ENCODE measurements at regions of chr9 and their contacts with region 1.

Region 1: GRCh38 chr9:21334701-21335632 is at the start of gene KLHL9:
- DNase-seq: peak; percentile 64 to 94 (median 86)
- ATAC-seq: peak; percentile 84
- H3K4me3 ChIP-seq: peak within 1 kb of the TSS; percentile 67 to 88
- H3K4me3 Mint-ChIP-seq: peak within 1 kb of the TSS; percentile 92
- H3K27ac ChIP-seq: peak within 1 kb of the TSS; percentile 93 to 96
- H3K27ac Mint-ChIP-seq: peak within 1 kb of the TSS; percentile 96
- H3K4me1 ChIP-seq: peaks cover 45% of the 10 kb centered on the region
- H3K4me1 Mint-ChIP-seq: peaks cover 56% of the 10 kb centered on the region
- H3K27me3 ChIP-seq: no peaks in the 10 kb centered on the region
- H3K27me3 Mint-ChIP-seq: no peaks in the 10 kb centered on the region
- CTCF ChIP-seq: no peak
- total RNA-seq, gene KLHL9: 11.2 to 11.4 TPM

Region 2: DNA sequence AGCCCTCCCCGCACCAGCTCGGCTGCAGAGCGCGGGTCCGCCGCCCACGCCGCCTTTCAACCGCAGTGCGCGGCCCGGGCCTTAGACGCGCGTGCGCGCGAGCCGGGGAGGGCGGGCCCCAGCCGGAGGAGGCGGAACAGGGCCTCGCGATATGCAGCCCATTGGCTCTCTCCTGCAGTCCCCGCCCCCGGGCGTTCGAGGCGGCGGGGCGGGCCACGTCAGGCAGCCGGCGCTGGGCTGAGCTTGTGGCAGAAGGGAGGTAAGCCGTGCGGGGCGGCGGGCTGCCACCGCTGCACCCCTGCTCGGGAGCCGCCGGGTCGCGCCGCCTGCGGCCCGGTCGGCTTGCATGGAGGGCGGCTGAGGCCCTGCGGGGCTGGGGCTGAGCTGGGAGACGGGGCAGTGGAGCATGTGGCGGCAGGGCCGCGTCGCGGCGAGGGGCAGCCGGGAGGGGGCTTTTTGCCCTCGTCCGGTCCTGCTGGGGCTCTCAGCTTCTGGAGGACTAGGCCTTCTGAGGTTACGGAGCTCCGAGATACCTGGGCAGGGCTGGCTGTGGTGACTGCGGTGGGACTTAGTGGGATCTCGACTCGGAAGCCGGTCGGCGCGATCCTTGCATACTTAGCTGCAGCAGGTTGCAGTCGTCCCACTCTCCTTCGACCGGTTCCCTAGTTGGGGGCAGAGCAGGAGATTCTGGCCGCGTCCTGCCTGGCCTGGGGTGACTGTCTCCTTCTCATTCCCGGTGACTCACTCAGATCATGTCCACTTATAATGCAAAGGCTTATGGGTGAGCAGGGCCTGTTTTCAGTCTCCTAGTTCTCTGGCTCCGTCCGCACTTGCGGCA is 650.7 kb before region 1 on chr9 and contains the start of gene FOCAD:
- CTCF ChIA-PET with region 1: no interaction called
- POLR2A ChIA-PET with region 1: no interaction called
- intact Hi-C with region 1: loop called in 1 of 2 experiments (anchors 5 kb)
- DNase-seq: peak; percentile 88 to 97 (median 94)
- ATAC-seq: peak; percentile 98
- H3K4me3 ChIP-seq: peak within 1 kb of the TSS; percentile 63 to 74
- H3K4me3 Mint-ChIP-seq: peak within 1 kb of the TSS; percentile 87
- H3K27ac ChIP-seq: peak within 1 kb of the TSS; percentile 57 to 64
- H3K27ac Mint-ChIP-seq: peak within 1 kb of the TSS; percentile 84
- H3K4me1 ChIP-seq: peaks cover 8% of the 10 kb centered on the region
- H3K4me1 Mint-ChIP-seq: peaks cover 20% of the 10 kb centered on the region
- H3K27me3 ChIP-seq: no peaks in the 10 kb centered on the region
- H3K27me3 Mint-ChIP-seq: no peaks in the 10 kb centered on the region
- CTCF ChIP-seq: no peak
- total RNA-seq, gene FOCAD: 7.1 to 9.8 TPM

Region 3: GRCh38 chr9:21311889-21312288 is 23.1 kb before region 1 on chr9:
- CTCF ChIA-PET with region 1: no interaction called
- POLR2A ChIA-PET with region 1: no interaction called
- intact Hi-C with region 1: no loop called
- DNase-seq: no peak
- ATAC-seq: no peak
- H3K4me3 ChIP-seq: no peak overlapping the region
- H3K4me3 Mint-ChIP-seq: no peak overlapping the region
- H3K27ac ChIP-seq: no peak overlapping the region
- H3K27ac Mint-ChIP-seq: no peak overlapping the region
- H3K4me1 ChIP-seq: no peaks in the 10 kb centered on the region
- H3K4me1 Mint-ChIP-seq: no peaks in the 10 kb centered on the region
- H3K27me3 ChIP-seq: no peaks in the 10 kb centered on the region
- H3K27me3 Mint-ChIP-seq: peaks cover 9% of the 10 kb centered on the region
- CTCF ChIP-seq: no peak

Region 4: DNA sequence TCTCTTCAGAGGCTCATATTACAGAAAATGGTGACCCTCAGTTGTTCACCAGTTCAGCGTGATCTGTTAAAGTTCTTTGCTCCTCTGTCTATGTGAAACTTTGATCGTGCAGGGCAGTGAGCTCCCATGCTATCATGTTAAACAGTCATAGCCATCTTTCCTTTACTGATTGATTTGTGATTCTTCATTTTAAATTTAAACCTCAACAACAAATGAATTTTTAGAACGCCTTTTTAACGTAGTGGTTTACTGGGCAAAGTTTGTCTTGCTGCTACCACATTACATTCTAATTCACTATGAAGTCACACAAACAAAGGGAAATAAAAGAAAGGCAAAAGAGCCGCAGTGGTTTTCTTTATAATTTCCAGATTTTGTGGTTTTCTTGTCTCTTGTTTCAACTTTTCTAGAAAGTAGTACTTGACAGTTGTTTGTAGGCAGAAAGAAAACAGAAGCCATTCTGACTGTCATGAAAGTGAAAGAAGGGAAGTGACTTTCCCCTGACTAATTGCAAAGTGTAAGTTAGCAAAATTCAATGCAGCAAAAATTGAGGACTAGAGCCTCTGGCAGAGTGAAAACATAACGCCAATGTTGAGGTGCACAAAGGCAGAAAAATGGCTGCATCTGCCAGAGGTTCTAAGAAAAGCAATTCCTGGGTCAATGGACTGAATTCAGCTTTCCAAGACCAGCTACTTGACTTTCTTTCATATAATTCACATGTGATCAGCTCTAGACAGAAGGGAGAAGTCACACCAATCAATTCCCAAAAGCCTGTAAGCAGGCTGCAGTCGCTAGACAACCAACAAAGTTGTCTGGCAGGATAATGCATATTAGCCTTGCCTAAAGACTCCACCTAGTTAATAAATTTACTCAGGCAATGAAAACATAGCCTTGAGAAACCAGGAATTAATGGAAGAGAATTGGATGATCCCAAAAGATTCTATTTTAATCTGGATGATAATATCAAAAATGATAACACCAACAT is 22.8 kb after region 1 on chr9:
- CTCF ChIA-PET with region 1: interaction called, 4 read pairs
- POLR2A ChIA-PET with region 1: interaction called, 4 read pairs
- intact Hi-C with region 1: loop called in 1 of 2 experiments (anchors 2 kb)
- DNase-seq: peak in 2 of 9 experiments; percentile 17 to 44
- ATAC-seq: peak; percentile 57
- H3K4me3 ChIP-seq: peak overlapping the region; percentile 5 to 16
- H3K4me3 Mint-ChIP-seq: peak overlapping the region; percentile 71
- H3K27ac ChIP-seq: peak overlapping the region in 1 of 2 experiments; percentile 32
- H3K27ac Mint-ChIP-seq: peak overlapping the region; percentile 84
- H3K4me1 ChIP-seq: peaks cover 17% of the 10 kb centered on the region
- H3K4me1 Mint-ChIP-seq: peaks cover 19% of the 10 kb centered on the region
- H3K27me3 ChIP-seq: no peaks in the 10 kb centered on the region
- H3K27me3 Mint-ChIP-seq: peaks cover 7% of the 10 kb centered on the region
- CTCF ChIP-seq: no peak

Region 5: DNA sequence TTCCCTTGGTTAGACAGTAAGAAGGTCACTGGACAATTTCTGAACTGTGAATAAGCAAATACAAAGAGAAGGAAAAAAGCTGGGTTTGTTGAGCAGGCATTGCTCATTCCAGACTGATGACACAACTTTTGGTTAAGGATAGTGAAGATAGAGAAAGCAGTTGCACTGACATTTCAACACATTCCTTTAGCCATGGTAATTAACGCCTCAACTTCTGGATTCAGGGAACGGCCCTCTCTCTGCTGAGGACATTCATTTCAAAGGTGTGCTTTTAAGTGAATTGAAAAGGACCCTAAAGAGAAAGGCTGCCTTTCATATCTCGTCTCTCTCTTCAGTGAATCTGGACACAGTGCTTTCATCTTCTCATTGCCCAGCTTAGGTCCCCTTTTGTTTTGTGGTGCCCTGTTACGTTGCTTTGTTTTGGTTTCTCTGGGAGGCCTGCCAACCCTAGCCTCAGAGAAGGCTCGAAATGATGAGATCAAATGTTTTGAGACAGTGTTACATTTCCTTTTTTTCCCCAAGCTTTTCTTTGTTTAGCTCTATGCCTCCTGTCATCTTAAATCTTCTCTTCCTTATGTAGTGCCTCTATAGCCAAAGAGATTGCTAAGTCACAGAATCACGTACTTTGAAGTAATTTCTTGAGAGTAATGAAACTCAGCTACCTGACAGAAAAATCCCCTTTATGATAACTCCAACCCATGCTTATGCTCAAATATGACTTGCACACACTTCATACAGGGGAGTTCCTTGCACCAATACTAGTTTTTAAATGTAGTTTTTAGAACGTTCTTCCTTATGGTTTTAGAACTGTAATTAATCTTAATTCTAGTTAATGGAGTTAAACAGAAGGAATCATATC is 241.6 kb after region 1 on chr9:
- CTCF ChIA-PET with region 1: no interaction called
- POLR2A ChIA-PET with region 1: no interaction called
- intact Hi-C with region 1: loop called in 1 of 2 experiments (anchors 2 kb)
- DNase-seq: peak in 5 of 9 experiments; percentile 26 to 78 (median 63)
- ATAC-seq: peak; percentile 70
- H3K4me3 ChIP-seq: no peak overlapping the region
- H3K4me3 Mint-ChIP-seq: peak overlapping the region; percentile 68
- H3K27ac ChIP-seq: peak overlapping the region in 1 of 2 experiments; percentile 22
- H3K27ac Mint-ChIP-seq: peak overlapping the region; percentile 93
- H3K4me1 ChIP-seq: peaks cover 40% of the 10 kb centered on the region
- H3K4me1 Mint-ChIP-seq: peaks cover 43% of the 10 kb centered on the region
- H3K27me3 ChIP-seq: peaks cover 0 to 2% of the 10 kb centered on the region in 2 experiments
- H3K27me3 Mint-ChIP-seq: no peaks in the 10 kb centered on the region
- CTCF ChIP-seq: no peak

Region 6: GRCh38 chr9:22002038-22002437 is 667.1 kb after region 1 on chr9:
- CTCF ChIA-PET with region 1: no interaction called
- POLR2A ChIA-PET with region 1: no interaction called
- intact Hi-C with region 1: loop called in 1 of 2 experiments (anchors 5 kb)
- DNase-seq: no peak
- ATAC-seq: no peak
- H3K4me3 ChIP-seq: no peak overlapping the region
- H3K4me3 Mint-ChIP-seq: no peak overlapping the region
- H3K27ac ChIP-seq: no peak overlapping the region
- H3K27ac Mint-ChIP-seq: no peak overlapping the region
- H3K4me1 ChIP-seq: peaks cover 11% of the 10 kb centered on the region
- H3K4me1 Mint-ChIP-seq: peaks cover 9% of the 10 kb centered on the region
- H3K27me3 ChIP-seq: peaks cover 17 to 19% of the 10 kb centered on the region in 2 experiments
- H3K27me3 Mint-ChIP-seq: peaks cover 49% of the 10 kb centered on the region
- CTCF ChIP-seq: no peak